ENCODE measurements at regions of chr3 and their contacts with region 1.

Region 1: DNA sequence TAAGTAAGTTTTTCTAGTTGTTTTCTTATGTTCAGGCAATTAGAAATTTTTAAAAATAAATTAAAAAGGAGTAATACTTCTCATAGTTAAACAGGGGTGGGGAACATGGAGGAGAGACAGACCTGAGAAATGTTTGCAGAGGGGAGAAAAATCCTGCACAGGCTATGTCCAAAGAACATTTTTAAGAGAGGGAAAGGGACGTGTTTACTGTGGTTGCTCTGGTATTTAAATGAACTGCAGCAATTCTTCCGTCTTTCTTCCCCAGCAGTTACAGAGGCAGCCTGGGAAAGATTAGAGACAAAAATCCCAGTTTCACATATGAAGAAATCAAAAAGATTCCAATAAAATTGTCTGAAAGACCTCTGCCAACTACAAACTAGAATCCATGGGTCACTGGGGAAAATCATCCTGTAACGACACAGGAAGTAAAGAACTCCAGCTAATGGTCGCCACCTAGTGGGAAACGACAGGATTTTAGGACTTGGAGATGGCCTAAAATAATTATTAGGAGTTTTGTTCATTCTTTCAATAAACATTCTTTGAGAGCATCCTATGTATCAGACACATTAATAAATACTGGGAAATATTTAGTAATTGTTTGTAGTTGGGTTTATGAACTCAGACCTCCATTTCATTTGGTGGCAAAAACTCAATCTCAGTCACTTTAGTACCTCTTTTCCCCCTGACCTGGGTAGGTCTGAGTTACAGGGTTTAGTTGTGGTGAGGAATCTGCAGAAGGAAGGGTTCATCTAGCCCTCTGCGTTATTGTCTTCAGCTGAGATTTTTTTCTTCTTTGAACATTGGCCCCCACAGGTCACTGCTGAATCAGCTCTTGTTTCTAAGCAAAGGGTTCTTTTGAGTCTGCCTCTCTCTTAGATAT is 69.9 kb upstream of the GOLIM4 start:
- DNase-seq: peak; percentile 76
- ATAC-seq: peak; percentile 96
- H3K4me3 ChIP-seq: no peak overlapping the region
- H3K27ac ChIP-seq: no peak overlapping the region
- H3K4me1 ChIP-seq: no peaks in the 10 kb centered on the region
- H3K27me3 ChIP-seq: no peaks in the 10 kb centered on the region
- CTCF ChIP-seq: peak; percentile 92
- POLR2A ChIP-seq: peak; percentile 39; the same call in 1 of the 2 replicates
- RAD21 ChIP-seq: peak; percentile 93

Region 2: GRCh38 chr3:167929968-167930367 is 235.7 kb before region 1 on chr3:
- CTCF ChIA-PET with region 1: no interaction called
- POLR2A ChIA-PET with region 1: no interaction called
- dilution Hi-C with region 1: no loop called
- in situ Hi-C with region 1: loop called (anchors 25 kb)
- intact Hi-C with region 1: loop called (anchors 5 kb)
- DNase-seq: no peak
- ATAC-seq: peak; percentile 42; the same call in 1 of the 2 replicates
- H3K4me3 ChIP-seq: no peak overlapping the region
- H3K27ac ChIP-seq: no peak overlapping the region
- H3K4me1 ChIP-seq: no peaks in the 10 kb centered on the region
- H3K27me3 ChIP-seq: no peaks in the 10 kb centered on the region
- CTCF ChIP-seq: no peak
- POLR2A ChIP-seq: no peak
- RAD21 ChIP-seq: no peak

Region 3: GRCh38 chr3:168003911-168004310 is 161.7 kb before region 1 on chr3:
- CTCF ChIA-PET with region 1: no interaction called
- POLR2A ChIA-PET with region 1: no interaction called
- dilution Hi-C with region 1: no loop called
- in situ Hi-C with region 1: no loop called
- intact Hi-C with region 1: no loop called
- DNase-seq: no peak
- ATAC-seq: no peak
- H3K4me3 ChIP-seq: no peak overlapping the region
- H3K27ac ChIP-seq: no peak overlapping the region
- H3K4me1 ChIP-seq: no peaks in the 10 kb centered on the region
- H3K27me3 ChIP-seq: no peaks in the 10 kb centered on the region; the same call in 1 of the 2 replicates
- CTCF ChIP-seq: no peak
- POLR2A ChIP-seq: no peak
- RAD21 ChIP-seq: no peak

Measured in IMR-90 (cell line).